Activated CD8-positive, alpha-beta T cell treated with anti-CD3 and anti-CD28 coated beads, Interleukin-2, amount 10 ng/mL, durations not matched to agents 7 days and 5 days (primary cell): ENCODE measurements at regions of chr16 and their contacts with region 1.

Region 1: GRCh38 chr16:84116720-84117493 is at the start of gene MBTPS1:
- DNase-seq: peak; percentile 98
- ATAC-seq: peak; percentile 95
- H3K4me3 Mint-ChIP-seq: peak within 1 kb of the TSS; percentile 93
- H3K27ac Mint-ChIP-seq: peak within 1 kb of the TSS; percentile 95
- H3K4me1 Mint-ChIP-seq: peaks cover 22% of the 10 kb centered on the region
- H3K27me3 Mint-ChIP-seq: no peaks in the 10 kb centered on the region
- total RNA-seq, gene MBTPS1: 49.3 to 52.7 TPM

Region 2: GRCh38 chr16:84096115-84097012 is 20.5 kb before region 1 on chr16:
- CTCF ChIA-PET with region 1: interaction called, 9 read pairs
- POLR2A ChIA-PET with region 1: interaction called, 15 read pairs
- DNase-seq: no peak
- ATAC-seq: no peak
- H3K4me3 Mint-ChIP-seq: no peak overlapping the region
- H3K27ac Mint-ChIP-seq: no peak overlapping the region
- H3K4me1 Mint-ChIP-seq: peaks cover 14% of the 10 kb centered on the region
- H3K27me3 Mint-ChIP-seq: no peaks in the 10 kb centered on the region

Region 3: DNA sequence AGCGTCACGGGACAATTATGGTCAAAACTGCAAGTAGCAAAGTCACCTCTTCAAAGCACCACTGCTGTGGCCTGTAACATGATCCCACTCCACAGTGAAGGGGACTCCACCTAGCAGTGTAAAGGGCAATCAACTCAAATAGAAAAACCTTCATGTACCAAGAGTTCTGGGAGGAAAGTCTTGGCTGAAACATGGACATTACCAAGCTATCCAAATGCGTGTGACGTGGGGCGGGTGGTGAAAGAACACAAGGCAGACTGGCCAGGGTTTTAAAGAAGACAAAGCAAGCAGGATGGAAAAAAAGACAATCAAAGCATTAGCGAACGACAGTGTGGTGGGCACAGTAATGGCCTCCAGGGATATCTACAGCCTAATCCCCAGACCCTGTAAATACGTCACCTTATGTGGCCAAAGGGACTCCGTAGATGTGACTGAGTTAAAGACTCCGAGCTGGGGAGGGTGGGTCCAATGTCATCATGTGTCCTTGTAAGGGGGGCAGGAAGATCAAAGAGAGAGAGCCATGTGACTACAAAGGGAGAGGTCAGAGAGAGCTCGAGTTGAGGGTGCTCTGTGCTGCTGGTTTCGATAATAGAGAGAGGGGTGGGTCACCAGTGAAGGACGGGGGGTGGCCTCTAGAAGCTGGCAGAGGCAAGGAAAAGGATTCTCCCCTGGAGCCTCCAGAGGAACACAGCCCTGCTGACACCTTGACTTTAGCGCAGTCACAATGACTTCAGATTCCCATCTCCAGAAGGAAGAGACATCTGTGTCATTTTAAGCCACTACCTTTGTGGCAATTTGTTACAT is 22.1 kb after region 1 on chr16:
- CTCF ChIA-PET with region 1: interaction called, 8 read pairs
- POLR2A ChIA-PET with region 1: interaction called, 16 read pairs
- DNase-seq: peak; percentile 61
- ATAC-seq: peak; percentile 73
- H3K4me3 Mint-ChIP-seq: no peak overlapping the region
- H3K27ac Mint-ChIP-seq: peak overlapping the region; percentile 66
- H3K4me1 Mint-ChIP-seq: peaks cover 35% of the 10 kb centered on the region
- H3K27me3 Mint-ChIP-seq: no peaks in the 10 kb centered on the region

Region 4: DNA sequence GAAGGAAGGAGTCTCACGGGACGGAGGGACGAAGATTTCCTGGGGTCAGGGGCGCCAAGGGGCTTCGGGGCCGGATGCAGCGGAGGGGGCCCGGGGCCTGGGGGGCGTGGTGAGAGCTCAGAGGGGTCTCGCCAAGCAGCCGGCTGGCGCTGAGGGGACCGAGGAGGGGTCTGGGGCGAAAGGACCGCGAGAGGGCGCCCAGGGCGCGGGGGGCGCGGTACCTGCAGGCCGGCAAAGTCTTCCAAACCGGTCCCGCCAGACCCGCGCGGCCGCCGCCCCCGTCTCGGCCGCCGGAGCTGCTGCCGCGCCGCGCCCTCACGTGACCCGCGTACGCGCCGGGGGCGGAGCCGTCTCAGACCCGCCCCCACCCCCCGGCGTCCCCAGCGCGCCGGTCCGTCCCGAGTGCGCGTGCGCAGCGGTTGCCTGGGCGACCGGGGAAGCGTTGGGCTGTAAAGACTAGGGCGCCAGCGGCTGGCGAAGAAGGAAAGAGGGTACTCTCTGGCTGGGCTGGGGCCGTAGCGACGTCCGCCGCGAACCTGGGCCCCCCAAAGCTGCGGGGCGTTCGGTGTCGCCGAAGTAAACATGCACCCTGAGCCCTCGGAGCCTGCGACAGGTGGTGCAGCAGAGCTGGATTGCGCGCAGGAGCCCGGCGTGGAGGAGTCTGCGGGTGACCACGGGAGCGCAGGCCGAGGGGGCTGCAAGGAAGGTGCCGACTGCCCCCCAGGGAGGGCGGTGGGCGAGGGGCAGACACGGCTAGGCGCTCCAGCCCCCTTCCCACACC is 28.1 kb after region 1 on chr16 and contains the starts of genes DNAAF1 and HSDL1:
- CTCF ChIA-PET with region 1: interaction called, 9 read pairs
- POLR2A ChIA-PET with region 1: interaction called, 16 read pairs
- DNase-seq: peak; percentile 93
- ATAC-seq: peak; percentile 77
- H3K4me3 Mint-ChIP-seq: peak within 1 kb of the TSS; percentile 96
- H3K27ac Mint-ChIP-seq: peak within 1 kb of the TSS; percentile 89
- H3K4me1 Mint-ChIP-seq: peaks cover 19% of the 10 kb centered on the region
- H3K27me3 Mint-ChIP-seq: peaks cover 7% of the 10 kb centered on the region
- total RNA-seq, gene DNAAF1: not detected
- total RNA-seq, gene HSDL1: 10.4 to 12.3 TPM